ENCODE measurements at regions of chr16 and their contacts with region 1.

Region 1: DNA sequence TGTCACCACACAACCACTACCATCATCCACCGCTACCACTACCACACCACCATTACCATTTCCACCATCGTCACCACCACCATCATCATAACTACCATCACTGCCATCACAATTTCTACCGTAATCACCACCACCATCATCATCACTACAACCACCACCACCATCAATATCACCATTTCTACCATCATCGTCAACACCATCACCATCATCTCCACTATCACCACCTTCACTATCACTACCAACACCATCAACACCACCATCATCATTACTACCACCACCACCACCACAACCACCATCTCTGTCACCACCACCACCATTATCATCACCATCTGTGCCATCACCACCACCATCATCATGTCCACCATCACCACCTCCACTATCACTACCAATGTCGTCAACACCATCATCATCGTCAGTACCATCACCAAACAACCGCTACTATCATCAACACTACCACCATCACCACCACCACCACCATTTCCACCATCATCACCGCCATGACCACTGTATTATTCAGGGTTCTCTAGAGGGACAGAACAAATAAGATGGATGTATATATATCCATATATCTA is 524.4 kb upstream of the C16orf82 start:
- DNase-seq: no peak
- ATAC-seq: no peak
- H3K4me3 ChIP-seq: no peak overlapping the region
- H3K27ac ChIP-seq: no peak overlapping the region
- H3K4me1 ChIP-seq: no peaks in the 10 kb centered on the region
- H3K27me3 ChIP-seq: no peaks in the 10 kb centered on the region
- CTCF ChIP-seq: no peak

Region 2: GRCh38 chr16:26791169-26791568 is 248.9 kb after region 1 on chr16:
- intact Hi-C with region 1: loop called in 1 of 2 experiments (anchors 5 kb)
- DNase-seq: no peak
- ATAC-seq: no peak
- H3K4me3 ChIP-seq: no peak overlapping the region
- H3K27ac ChIP-seq: no peak overlapping the region
- H3K4me1 ChIP-seq: no peaks in the 10 kb centered on the region
- H3K27me3 ChIP-seq: no peaks in the 10 kb centered on the region
- CTCF ChIP-seq: no peak

Measured in psoas muscle (tissue), 8 donors.